ENCODE measurements at regions of chr5 and their contacts with region 1.

Region 1: GRCh38 chr5:151164686-151165392 is 7.3 kb upstream of the ANXA6 start:
- DNase-seq: peak; percentile 60 to 92 (median 77)
- ATAC-seq: peak; percentile 93 to 99 (median 95)
- H3K4me3 ChIP-seq: no peak overlapping the region
- H3K4me3 Mint-ChIP-seq: no peak overlapping the region
- H3K27ac ChIP-seq: no peak overlapping the region
- H3K27ac Mint-ChIP-seq: peak overlapping the region in 1 of 2 donors; percentile 2
- H3K4me1 ChIP-seq: peaks cover 7 to 8% of the 10 kb centered on the region in 2 experiments
- H3K4me1 Mint-ChIP-seq: peaks cover 20 to 41% (median 26%) of the 10 kb centered on the region in 3 donors
- H3K27me3 ChIP-seq: no peaks in the 10 kb centered on the region
- H3K27me3 Mint-ChIP-seq: no peaks in the 10 kb centered on the region

Region 2: DNA sequence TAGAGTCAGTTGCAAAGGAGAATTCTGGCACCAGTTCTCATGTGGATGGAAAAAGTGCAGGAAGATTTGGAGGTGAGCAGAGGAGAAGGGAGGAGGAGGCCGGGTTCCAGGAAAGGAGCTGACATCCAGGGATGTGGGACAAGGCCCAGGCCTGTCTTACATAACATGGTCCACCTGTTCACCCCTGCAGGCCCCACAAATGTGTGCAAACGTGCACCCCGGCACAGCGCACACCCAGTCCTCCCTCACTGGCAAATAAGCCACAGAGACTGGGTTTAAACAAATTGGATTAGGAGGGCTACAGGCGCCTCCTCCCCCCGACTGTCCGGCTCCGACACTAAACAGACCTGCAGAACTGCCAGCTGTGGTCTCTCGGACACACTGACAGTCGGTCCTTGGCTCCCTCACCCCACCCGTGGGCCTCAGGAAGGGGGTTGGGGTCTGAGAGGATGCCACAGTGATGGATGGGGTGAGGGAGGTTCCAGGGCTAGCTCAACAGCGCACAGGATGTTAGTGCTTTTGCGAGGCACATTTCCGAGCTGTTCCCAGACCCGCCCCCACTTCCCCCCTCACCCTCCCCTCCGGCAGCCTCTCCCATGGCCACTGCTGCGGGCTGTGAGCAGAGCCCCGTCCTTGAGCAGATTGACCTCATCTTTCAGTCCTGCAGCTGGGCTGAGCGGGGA is 1742.3 kb before region 1 on chr5:
- CTCF ChIA-PET with region 1: no interaction called
- POLR2A ChIA-PET with region 1: no interaction called
- DNase-seq: peak in 9 of 35 experiments; percentile 5 to 41 (median 18)
- ATAC-seq: peak; percentile 61 to 78 (median 72)
- H3K4me3 ChIP-seq: no peak overlapping the region
- H3K4me3 Mint-ChIP-seq: peak overlapping the region in 1 of 3 donors; percentile 42
- H3K27ac ChIP-seq: no peak overlapping the region
- H3K27ac Mint-ChIP-seq: no peak overlapping the region
- H3K4me1 ChIP-seq: peaks cover 11% of the 10 kb centered on the region in 2 experiments
- H3K4me1 Mint-ChIP-seq: peaks cover 3 to 15% (median 4%) of the 10 kb centered on the region in 3 donors
- H3K27me3 ChIP-seq: peaks cover 0 to 24% of the 10 kb centered on the region in 2 experiments
- H3K27me3 Mint-ChIP-seq: peaks cover 0 to 4% of the 10 kb centered on the region in 2 donors

Region 3: GRCh38 chr5:151051066-151051930 is 113.5 kb before region 1 on chr5:
- CTCF ChIA-PET with region 1: interaction called, 8 to 23 read pairs
- POLR2A ChIA-PET with region 1: no interaction called
- DNase-seq: peak; percentile 37 to 84 (median 63)
- ATAC-seq: peak; percentile 62 to 80 (median 76)
- H3K4me3 ChIP-seq: no peak overlapping the region
- H3K4me3 Mint-ChIP-seq: no peak overlapping the region
- H3K27ac ChIP-seq: no peak overlapping the region
- H3K27ac Mint-ChIP-seq: peak overlapping the region in 1 of 2 donors; percentile 46
- H3K4me1 ChIP-seq: no peaks in the 10 kb centered on the region
- H3K4me1 Mint-ChIP-seq: peaks cover 10 to 13% (median 13%) of the 10 kb centered on the region in 3 donors
- H3K27me3 ChIP-seq: no peaks in the 10 kb centered on the region
- H3K27me3 Mint-ChIP-seq: no peaks in the 10 kb centered on the region

Region 4: DNA sequence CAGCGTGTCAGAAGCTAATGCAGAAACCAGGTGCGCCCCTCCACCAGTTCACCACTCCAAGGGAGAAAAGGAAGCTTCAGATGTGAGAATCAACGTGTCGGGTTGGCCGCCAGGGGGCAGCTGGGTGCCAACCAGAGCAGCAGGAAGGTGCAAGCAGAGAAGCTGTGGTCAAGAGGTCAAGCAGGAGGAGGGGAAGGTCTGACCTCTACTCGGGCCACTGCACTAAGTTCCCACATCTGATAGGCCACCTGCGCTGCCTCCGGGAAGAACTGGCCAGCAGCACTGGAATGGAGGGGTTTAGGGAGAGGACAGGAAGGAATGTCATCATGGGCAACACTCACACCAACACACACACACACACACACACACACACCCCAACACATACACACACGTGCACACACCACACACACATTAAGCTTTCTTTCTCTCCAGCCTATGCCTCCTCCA is 38.6 kb before region 1 on chr5:
- CTCF ChIA-PET with region 1: interaction called, 137 to 173 read pairs
- POLR2A ChIA-PET with region 1: interaction called, 3 to 5 read pairs
- DNase-seq: peak; percentile 17 to 81 (median 60)
- ATAC-seq: peak; percentile 57 to 71 (median 62)
- H3K4me3 ChIP-seq: no peak overlapping the region
- H3K4me3 Mint-ChIP-seq: peak overlapping the region in 2 of 3 donors; percentile 35 to 56
- H3K27ac ChIP-seq: peak overlapping the region; percentile 56
- H3K27ac Mint-ChIP-seq: peak overlapping the region; percentile 85 to 86
- H3K4me1 ChIP-seq: peaks cover 13 to 36% of the 10 kb centered on the region in 2 experiments
- H3K4me1 Mint-ChIP-seq: peaks cover 49 to 67% (median 60%) of the 10 kb centered on the region in 3 donors
- H3K27me3 ChIP-seq: no peaks in the 10 kb centered on the region
- H3K27me3 Mint-ChIP-seq: no peaks in the 10 kb centered on the region

Region 5: DNA sequence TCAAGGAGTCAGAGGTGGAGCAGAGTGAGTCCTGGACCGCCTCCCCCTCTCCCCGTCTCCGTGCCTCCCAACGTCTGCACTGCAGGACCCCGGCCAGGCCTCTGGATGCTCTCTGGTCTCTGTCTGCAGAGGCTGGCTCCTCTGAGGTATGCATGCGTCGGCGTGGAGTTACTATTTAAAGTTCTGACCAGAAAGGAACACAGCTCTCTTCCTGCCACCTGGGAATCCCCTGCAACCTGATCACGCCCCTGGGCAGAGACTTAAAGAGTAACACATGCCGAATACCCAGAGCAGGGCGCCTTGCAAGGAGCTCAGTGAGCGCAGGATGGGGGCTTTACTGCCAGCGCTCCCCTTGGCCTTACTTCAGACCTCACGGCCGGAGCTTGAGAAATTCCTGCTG is 23.3 kb before region 1 on chr5:
- CTCF ChIA-PET with region 1: interaction called, 6 to 25 read pairs
- POLR2A ChIA-PET with region 1: no interaction called
- DNase-seq: peak in 33 of 35 experiments; percentile 27 to 78 (median 56)
- ATAC-seq: peak; percentile 72 to 86 (median 82)
- H3K4me3 ChIP-seq: peak overlapping the region; percentile 15 to 52
- H3K4me3 Mint-ChIP-seq: peak overlapping the region; percentile 75 to 96 (median 77)
- H3K27ac ChIP-seq: peak overlapping the region; percentile 66
- H3K27ac Mint-ChIP-seq: peak overlapping the region; percentile 96 to 98
- H3K4me1 ChIP-seq: peaks cover 67 to 98% of the 10 kb centered on the region in 2 experiments
- H3K4me1 Mint-ChIP-seq: peaks cover 95 to 100% (median 97%) of the 10 kb centered on the region in 3 donors
- H3K27me3 ChIP-seq: no peaks in the 10 kb centered on the region
- H3K27me3 Mint-ChIP-seq: no peaks in the 10 kb centered on the region

Region 6: GRCh38 chr5:151252762-151253604 is 88.1 kb after region 1 on chr5 and contains the start of gene GM2A:
- CTCF ChIA-PET with region 1: interaction called in 1 of 2 experiments, 18 read pairs
- POLR2A ChIA-PET with region 1: interaction called in 1 of 2 experiments, 11 read pairs
- DNase-seq: peak; percentile 94 to 99 (median 97)
- ATAC-seq: peak; percentile 96 to 99 (median 97)
- H3K4me3 ChIP-seq: peak within 1 kb of the TSS; percentile 74 to 82
- H3K4me3 Mint-ChIP-seq: peak within 1 kb of the TSS; percentile 74 to 95 (median 90)
- H3K27ac ChIP-seq: peak within 1 kb of the TSS; percentile 62
- H3K27ac Mint-ChIP-seq: peak within 1 kb of the TSS; percentile 91 to 93
- H3K4me1 ChIP-seq: peaks cover 9 to 32% of the 10 kb centered on the region in 2 experiments
- H3K4me1 Mint-ChIP-seq: peaks cover 32 to 67% (median 48%) of the 10 kb centered on the region in 3 donors
- H3K27me3 ChIP-seq: no peaks in the 10 kb centered on the region
- H3K27me3 Mint-ChIP-seq: no peaks in the 10 kb centered on the region
- total RNA-seq, gene GM2A: 8.2 to 20.9 (median 11.5) TPM

Region 7: GRCh38 chr5:151829370-151829769 is 664.5 kb after region 1 on chr5:
- CTCF ChIA-PET with region 1: no interaction called
- POLR2A ChIA-PET with region 1: no interaction called
- DNase-seq: no peak
- ATAC-seq: no peak
- H3K4me3 ChIP-seq: no peak overlapping the region
- H3K4me3 Mint-ChIP-seq: no peak overlapping the region
- H3K27ac ChIP-seq: no peak overlapping the region
- H3K27ac Mint-ChIP-seq: no peak overlapping the region
- H3K4me1 ChIP-seq: peaks cover 0 to 15% of the 10 kb centered on the region in 2 experiments
- H3K4me1 Mint-ChIP-seq: peaks cover 14 to 28% (median 17%) of the 10 kb centered on the region in 3 donors
- H3K27me3 ChIP-seq: no peaks in the 10 kb centered on the region
- H3K27me3 Mint-ChIP-seq: no peaks in the 10 kb centered on the region